ENCODE measurements at regions of chr2 and their contacts with region 1.

Region 1: GRCh38 chr2:207166039-207166348 is 246 bp upstream of the KLF7 start:
- DNase-seq: peak; percentile 99
- H3K4me3 ChIP-seq: peak overlapping the region; percentile 81 to 85
- H3K27ac ChIP-seq: peak overlapping the region; percentile 100
- H3K4me1 ChIP-seq: no peaks in the 10 kb centered on the region
- H3K27me3 ChIP-seq: no peaks in the 10 kb centered on the region
- CTCF ChIP-seq: no peak
- POLR2A ChIP-seq: no peak

Region 2: GRCh38 chr2:206159346-206160124 is 1006.5 kb before region 1 on chr2 and contains the starts of genes EEF1B2 and NDUFS1:
- intact Hi-C with region 1: loop called (anchors 10 kb)
- DNase-seq: peak; percentile 98
- H3K4me3 ChIP-seq: peak within 1 kb of the TSS; percentile 65 to 76
- H3K27ac ChIP-seq: peak within 1 kb of the TSS; percentile 91 to 98
- H3K4me1 ChIP-seq: peaks cover 7% of the 10 kb centered on the region
- H3K27me3 ChIP-seq: no peaks in the 10 kb centered on the region
- CTCF ChIP-seq: peak in 1 of 4 experiments; percentile 14
- POLR2A ChIP-seq: peak; percentile 55
- total RNA-seq, gene EEF1B2: 305 to 491 TPM
- total RNA-seq, gene NDUFS1: 74.1 to 80.1 TPM

Region 3: GRCh38 chr2:206981739-206982340 is 184.2 kb before region 1 on chr2:
- intact Hi-C with region 1: loop called (anchors 10 kb)
- DNase-seq: peak; percentile 78
- H3K4me3 ChIP-seq: no peak overlapping the region
- H3K27ac ChIP-seq: no peak overlapping the region
- H3K4me1 ChIP-seq: no peaks in the 10 kb centered on the region
- H3K27me3 ChIP-seq: no peaks in the 10 kb centered on the region
- CTCF ChIP-seq: peak; percentile 62 to 89 (median 81)
- POLR2A ChIP-seq: no peak

Region 4: GRCh38 chr2:207258263-207258991 is 92.4 kb after region 1 on chr2:
- intact Hi-C with region 1: loop called (anchors 2 kb)
- DNase-seq: peak; percentile 84
- H3K4me3 ChIP-seq: no peak overlapping the region
- H3K27ac ChIP-seq: peak overlapping the region; percentile 54 to 65
- H3K4me1 ChIP-seq: peaks cover 15% of the 10 kb centered on the region
- H3K27me3 ChIP-seq: no peaks in the 10 kb centered on the region
- CTCF ChIP-seq: peak in 1 of 4 experiments; percentile 19
- POLR2A ChIP-seq: no peak

Region 5: DNA sequence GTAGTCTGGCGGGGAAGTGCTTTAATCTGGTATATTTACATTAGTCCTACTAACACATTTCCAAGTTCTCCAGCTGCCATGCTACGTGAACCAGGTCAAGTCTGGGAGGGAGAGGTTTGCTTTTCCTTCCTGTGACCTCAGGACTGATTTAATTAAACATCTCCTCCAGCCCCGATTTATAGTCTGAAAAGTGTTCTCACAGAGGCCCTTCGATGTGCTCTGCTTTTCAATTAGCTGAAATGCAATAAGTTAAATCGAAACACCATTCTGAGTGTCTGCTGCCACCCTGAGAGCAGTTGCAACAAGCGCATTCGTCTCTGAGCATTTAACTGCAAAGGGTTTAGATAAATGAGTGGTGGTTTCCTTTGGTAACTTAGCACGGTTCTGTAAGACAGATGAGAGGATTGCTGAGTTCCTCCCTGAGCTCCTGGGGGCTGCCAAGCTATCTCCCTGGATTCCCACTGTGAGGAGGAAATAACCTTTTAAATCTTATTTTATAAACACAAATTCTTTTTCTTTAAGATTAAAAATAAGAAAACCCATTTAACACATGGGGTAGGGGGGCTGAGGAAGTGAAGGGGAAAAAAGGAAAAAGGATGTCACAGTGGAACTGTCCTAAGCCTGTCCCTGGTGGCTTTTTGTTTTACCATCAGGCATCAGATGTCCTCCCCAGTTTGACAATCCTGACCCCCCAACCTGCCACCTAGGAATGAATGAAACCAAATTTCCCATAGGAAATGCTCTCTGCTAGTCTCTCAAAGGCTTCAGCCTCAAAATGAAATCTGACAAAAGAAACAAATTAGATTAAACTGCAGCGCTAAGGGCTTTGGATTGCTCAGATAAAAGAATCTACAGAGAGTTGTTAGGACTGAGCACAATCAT is 307.3 kb after region 1 on chr2:
- intact Hi-C with region 1: loop called (anchors 5 kb)
- DNase-seq: peak; percentile 21
- H3K4me3 ChIP-seq: no peak overlapping the region
- H3K27ac ChIP-seq: no peak overlapping the region
- H3K4me1 ChIP-seq: no peaks in the 10 kb centered on the region
- H3K27me3 ChIP-seq: no peaks in the 10 kb centered on the region
- CTCF ChIP-seq: peak in 3 of 4 experiments; percentile 21 to 58 (median 49)
- POLR2A ChIP-seq: no peak

Measured in prostate gland (tissue), 2 donors.